Upper lobe of right lung (tissue), 1 donor: ENCODE measurements at regions of chr4 and their contacts with region 1.

Region 1: GRCh38 chr4:60744767-60745166 is 455.4 kb upstream of the ADGRL3 start:
- DNase-seq: no peak
- ATAC-seq: no peak
- H3K4me3 ChIP-seq: no peak overlapping the region
- H3K27ac ChIP-seq: no peak overlapping the region
- H3K4me1 ChIP-seq: no peaks in the 10 kb centered on the region
- H3K27me3 ChIP-seq: no peaks in the 10 kb centered on the region
- CTCF ChIP-seq: no peak

Region 2: GRCh38 chr4:60327651-60328050 is 417.1 kb before region 1 on chr4:
- intact Hi-C with region 1: loop called (anchors 10 kb)
- DNase-seq: no peak
- ATAC-seq: no peak
- H3K4me3 ChIP-seq: no peak overlapping the region
- H3K27ac ChIP-seq: no peak overlapping the region
- H3K4me1 ChIP-seq: no peaks in the 10 kb centered on the region
- H3K27me3 ChIP-seq: no peaks in the 10 kb centered on the region
- CTCF ChIP-seq: no peak

Region 3: GRCh38 chr4:60913002-60913401 is 168.2 kb after region 1 on chr4:
- intact Hi-C with region 1: no loop called
- DNase-seq: no peak
- ATAC-seq: no peak
- H3K4me3 ChIP-seq: no peak overlapping the region
- H3K27ac ChIP-seq: no peak overlapping the region
- H3K4me1 ChIP-seq: no peaks in the 10 kb centered on the region
- H3K27me3 ChIP-seq: no peaks in the 10 kb centered on the region
- CTCF ChIP-seq: no peak